ENCODE measurements at regions of chr22 and their contacts with region 1.

Region 1: DNA sequence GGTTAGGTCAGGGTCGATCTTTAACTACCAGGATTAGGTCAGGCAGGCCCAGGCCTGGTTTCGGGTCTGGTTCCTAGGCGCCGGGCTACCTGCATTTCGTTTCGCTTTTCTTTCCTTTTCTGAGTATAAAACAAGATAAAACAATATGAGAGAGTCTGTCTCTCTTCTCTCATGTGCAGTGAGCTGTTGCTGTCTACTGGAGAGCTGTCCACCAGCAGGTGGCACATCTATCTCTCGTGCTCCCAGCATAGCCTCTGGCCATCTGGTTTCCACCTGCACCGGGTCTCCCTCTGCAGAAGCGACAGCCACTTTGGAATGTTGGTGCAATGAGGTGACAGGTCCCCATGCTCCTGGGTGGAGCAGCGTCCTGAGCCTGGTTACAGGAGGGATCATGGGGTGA is 27.6 kb downstream of the RIBC2 start:
- DNase-seq: peak in 7 of 9 donors; percentile 20 to 45 (median 32)
- ATAC-seq: peak; percentile 90
- H3K4me3 ChIP-seq: peak overlapping the region; percentile 29
- H3K4me3 Mint-ChIP-seq: peak overlapping the region; percentile 70 to 90 (median 86)
- H3K27ac ChIP-seq: peak overlapping the region; percentile 40
- H3K27ac Mint-ChIP-seq: peak overlapping the region; percentile 24 to 95 (median 83)
- H3K4me1 ChIP-seq: peaks cover 3 to 7% of the 10 kb centered on the region in 2 donors
- H3K4me1 Mint-ChIP-seq: peaks cover 0 to 20% (median 11%) of the 10 kb centered on the region in 7 donors
- H3K27me3 ChIP-seq: no peaks in the 10 kb centered on the region
- H3K27me3 Mint-ChIP-seq: peaks cover 0 to 15% (median 0%) of the 10 kb centered on the region in 5 donors

Region 2: DNA sequence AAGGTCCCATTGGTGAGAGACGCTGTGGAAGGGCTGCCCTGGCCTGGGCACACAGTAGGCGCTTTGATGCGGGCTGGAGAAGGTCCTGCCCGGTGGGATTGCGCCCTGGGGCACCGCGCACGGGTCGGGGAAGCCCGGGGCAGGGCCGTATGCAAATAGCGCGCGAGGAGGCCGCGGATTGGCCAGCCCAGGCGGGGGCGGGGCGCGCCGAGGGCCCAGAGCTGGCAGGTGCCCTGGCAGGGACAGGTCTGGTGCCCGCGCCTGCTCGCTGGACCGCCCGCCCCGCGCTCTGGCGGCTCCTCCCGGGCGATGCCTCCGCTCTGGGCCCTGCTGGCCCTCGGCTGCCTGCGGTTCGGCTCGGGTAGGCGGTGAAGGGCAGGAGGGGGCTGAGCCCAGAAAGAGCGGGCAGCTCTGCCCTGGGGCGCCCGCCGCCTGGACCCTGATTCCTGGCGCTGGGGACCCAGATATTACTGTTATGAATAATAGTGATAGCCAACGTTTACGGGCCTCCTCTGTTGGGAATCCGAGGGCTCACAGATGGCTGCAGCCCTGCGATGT is 156.4 kb before region 1 on chr22 and contains the start of gene UPK3A:
- CTCF ChIA-PET with region 1: no interaction called
- POLR2A ChIA-PET with region 1: no interaction called
- intact Hi-C with region 1: no loop called
- DNase-seq: peak; percentile 43 to 65 (median 58)
- ATAC-seq: peak; percentile 98
- H3K4me3 ChIP-seq: peak within 1 kb of the TSS; percentile 46
- H3K4me3 Mint-ChIP-seq: peak within 1 kb of the TSS; percentile 9 to 64 (median 50)
- H3K27ac ChIP-seq: no peak within 1 kb of the TSS
- H3K27ac Mint-ChIP-seq: peak within 1 kb of the TSS in 1 of 9 donors; percentile 60
- H3K4me1 ChIP-seq: peaks cover 3 to 10% of the 10 kb centered on the region in 2 donors
- H3K4me1 Mint-ChIP-seq: peaks cover 4 to 16% (median 13%) of the 10 kb centered on the region in 7 donors
- H3K27me3 ChIP-seq: no peaks in the 10 kb centered on the region
- H3K27me3 Mint-ChIP-seq: peaks cover 4 to 43% (median 10%) of the 10 kb centered on the region in 5 donors
- total RNA-seq, gene UPK3A: 0.61 TPM in 1 of 5 experiments, not detected in the others

Region 3: DNA sequence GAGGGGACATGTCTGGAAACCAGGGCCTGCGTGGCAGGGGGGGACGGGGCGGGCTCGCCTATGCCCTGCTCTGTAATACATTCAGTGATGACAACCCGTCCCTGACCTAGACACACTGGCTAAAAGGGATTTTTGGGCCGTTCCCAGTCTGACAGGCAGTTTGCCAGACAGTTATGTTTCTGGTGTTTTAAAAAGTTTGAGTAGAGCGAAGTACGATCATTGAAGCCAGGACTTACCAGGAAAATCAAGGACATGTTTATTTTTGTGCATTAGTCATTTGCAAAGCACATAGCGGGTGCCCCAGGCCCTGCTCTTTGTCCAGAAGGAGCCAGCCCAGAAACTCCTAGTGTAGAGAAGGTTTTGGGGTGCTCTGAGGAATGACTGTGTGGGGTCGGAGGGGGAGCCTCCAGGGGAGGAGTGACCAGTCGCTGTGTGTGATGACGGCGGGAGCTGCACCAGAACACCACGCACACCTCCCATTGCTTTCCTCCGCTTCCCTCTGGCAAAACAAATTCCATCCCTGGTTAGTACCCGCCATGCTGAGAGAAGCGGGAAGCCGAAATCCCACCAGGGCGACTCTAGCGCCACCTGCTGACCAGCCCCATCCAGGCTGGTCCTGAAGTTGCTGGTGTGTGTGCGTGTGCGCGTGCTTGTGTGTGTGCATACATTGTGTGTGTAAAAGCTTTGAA is 112.4 kb after region 1 on chr22:
- CTCF ChIA-PET with region 1: interaction called, 3 read pairs
- POLR2A ChIA-PET with region 1: no interaction called
- intact Hi-C with region 1: loop called in 1 of 2 experiments (anchors 2 kb)
- DNase-seq: peak; percentile 8 to 63 (median 30)
- ATAC-seq: peak; percentile 68
- H3K4me3 ChIP-seq: no peak overlapping the region
- H3K4me3 Mint-ChIP-seq: no peak overlapping the region
- H3K27ac ChIP-seq: no peak overlapping the region
- H3K27ac Mint-ChIP-seq: peak overlapping the region in 1 of 9 donors; percentile 47
- H3K4me1 ChIP-seq: no peaks in the 10 kb centered on the region
- H3K4me1 Mint-ChIP-seq: peaks cover 0 to 3% (median 0%) of the 10 kb centered on the region in 7 donors
- H3K27me3 ChIP-seq: no peaks in the 10 kb centered on the region
- H3K27me3 Mint-ChIP-seq: peaks cover 0 to 16% (median 4%) of the 10 kb centered on the region in 5 donors